IMR-90 (cell line): ENCODE measurements at regions of chr7 and their contacts with region 1.

Region 1: DNA sequence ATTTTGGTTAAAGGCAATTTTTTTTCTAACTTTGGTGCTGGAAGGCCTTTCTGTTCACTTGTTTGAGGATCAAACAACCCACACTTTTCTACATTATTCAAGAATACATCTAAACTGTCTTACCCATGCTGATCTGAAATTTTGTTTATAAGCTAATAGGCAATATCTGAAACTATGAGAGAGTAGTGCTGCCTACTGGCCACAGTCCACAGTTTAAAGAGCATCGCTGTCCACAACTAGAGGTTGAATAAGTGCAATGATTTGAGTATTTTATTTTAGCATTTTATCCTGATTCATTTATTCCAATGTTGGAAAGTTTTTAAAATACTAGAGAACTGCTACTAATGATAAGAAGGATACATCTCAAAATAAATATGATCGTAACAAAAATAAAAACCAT is 306.9 kb downstream of the ELMO1 start:
- DNase-seq: no peak
- ATAC-seq: no peak
- H3K4me3 ChIP-seq: no peak overlapping the region
- H3K27ac ChIP-seq: no peak overlapping the region
- H3K4me1 ChIP-seq: no peaks in the 10 kb centered on the region
- H3K27me3 ChIP-seq: no peaks in the 10 kb centered on the region
- CTCF ChIP-seq: no peak; the same call in 1 of the 2 replicates
- POLR2A ChIP-seq: no peak
- RAD21 ChIP-seq: no peak

Region 2: GRCh38 chr7:36227223-36227622 is 914.5 kb before region 1 on chr7:
- CTCF ChIA-PET with region 1: no interaction called
- POLR2A ChIA-PET with region 1: no interaction called
- dilution Hi-C with region 1: no loop called
- in situ Hi-C with region 1: no loop called
- intact Hi-C with region 1: no loop called
- DNase-seq: peak; percentile 72
- ATAC-seq: peak; percentile 87
- H3K4me3 ChIP-seq: no peak overlapping the region
- H3K27ac ChIP-seq: peak overlapping the region; percentile 17; the same call in 1 of the 2 replicates
- H3K4me1 ChIP-seq: peaks cover 12% of the 10 kb centered on the region
- H3K27me3 ChIP-seq: no peaks in the 10 kb centered on the region
- CTCF ChIP-seq: no peak
- POLR2A ChIP-seq: no peak
- RAD21 ChIP-seq: no peak

Region 3: DNA sequence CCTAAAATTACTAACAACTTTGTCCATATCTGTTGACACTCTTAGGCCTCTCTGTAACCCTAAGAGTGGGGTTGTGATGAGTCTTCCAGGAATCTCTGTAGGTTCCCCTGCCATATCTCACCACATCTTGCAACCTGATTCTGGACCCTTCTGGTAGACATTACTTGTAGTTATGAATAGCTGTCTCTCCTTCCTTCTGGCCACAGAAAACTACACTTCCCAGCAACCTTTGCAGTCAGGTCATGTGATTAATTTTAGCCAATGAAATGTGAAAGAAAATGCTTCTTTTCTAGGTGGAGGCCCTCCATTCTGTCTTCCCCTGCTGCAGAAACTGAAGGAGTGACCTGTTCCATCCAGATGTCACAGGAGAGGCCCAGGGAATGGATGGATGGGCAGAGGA is 269.9 kb before region 1 on chr7:
- CTCF ChIA-PET with region 1: interaction called, 5 read pairs
- POLR2A ChIA-PET with region 1: no interaction called
- dilution Hi-C with region 1: no loop called
- in situ Hi-C with region 1: no loop called
- intact Hi-C with region 1: loop called (anchors 5 kb)
- DNase-seq: peak; percentile 2
- ATAC-seq: no peak
- H3K4me3 ChIP-seq: no peak overlapping the region
- H3K27ac ChIP-seq: no peak overlapping the region
- H3K4me1 ChIP-seq: no peaks in the 10 kb centered on the region
- H3K27me3 ChIP-seq: no peaks in the 10 kb centered on the region
- CTCF ChIP-seq: no peak
- POLR2A ChIP-seq: no peak
- RAD21 ChIP-seq: no peak

Region 4: DNA sequence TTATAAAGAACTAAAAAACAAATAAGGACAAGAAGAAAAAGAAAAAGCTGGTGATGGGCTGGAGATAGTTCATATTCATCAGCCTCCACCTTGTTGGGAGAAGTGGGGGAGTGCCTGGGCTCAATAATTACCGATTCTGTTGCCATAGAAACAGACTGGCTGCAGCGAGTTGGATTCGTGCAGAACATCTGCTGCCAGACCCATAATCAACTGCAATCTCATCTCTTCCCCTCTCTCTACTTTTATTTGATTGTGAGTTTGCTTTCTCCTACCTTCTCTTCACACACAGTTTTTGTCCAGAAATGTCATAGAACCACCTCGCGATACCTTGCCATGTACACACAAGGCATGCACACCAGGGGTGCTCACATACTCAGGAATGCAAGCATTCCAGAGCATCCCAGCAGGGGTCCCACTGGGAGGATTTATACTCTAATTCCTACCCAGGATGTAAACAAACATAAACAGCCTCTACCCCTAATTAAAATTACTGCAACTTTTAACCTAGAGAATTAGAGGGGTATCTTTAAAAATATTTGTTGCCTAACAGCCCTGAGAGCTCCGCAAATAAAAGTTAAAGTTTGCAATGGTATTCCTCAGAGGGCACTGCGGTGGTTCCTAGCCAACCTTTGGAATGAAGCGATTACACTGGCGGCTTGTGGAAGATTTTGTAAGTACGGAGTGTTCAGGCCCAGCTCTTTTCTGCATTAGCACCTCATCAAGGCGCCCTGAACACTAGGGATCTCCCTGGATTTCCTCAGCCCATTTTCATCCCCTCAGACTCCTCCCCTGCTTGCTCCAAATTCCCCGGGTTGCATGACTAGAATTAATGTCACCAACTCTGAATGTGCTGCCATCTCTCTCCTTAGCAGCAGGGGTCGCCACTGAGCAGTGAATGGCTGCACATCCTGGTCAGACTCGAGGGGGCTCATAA is 155.0 kb before region 1 on chr7:
- CTCF ChIA-PET with region 1: no interaction called
- POLR2A ChIA-PET with region 1: no interaction called
- dilution Hi-C with region 1: no loop called
- in situ Hi-C with region 1: no loop called
- intact Hi-C with region 1: loop called (anchors 2 kb)
- DNase-seq: peak; percentile 42
- ATAC-seq: peak; percentile 94
- H3K4me3 ChIP-seq: no peak overlapping the region
- H3K27ac ChIP-seq: no peak overlapping the region
- H3K4me1 ChIP-seq: no peaks in the 10 kb centered on the region
- H3K27me3 ChIP-seq: peaks cover 15% of the 10 kb centered on the region
- CTCF ChIP-seq: peak; percentile 88
- POLR2A ChIP-seq: no peak
- RAD21 ChIP-seq: peak; percentile 81

Region 5: GRCh38 chr7:37643876-37644275 is 502.1 kb after region 1 on chr7:
- CTCF ChIA-PET with region 1: no interaction called
- POLR2A ChIA-PET with region 1: no interaction called
- dilution Hi-C with region 1: no loop called
- in situ Hi-C with region 1: no loop called
- intact Hi-C with region 1: no loop called
- DNase-seq: no peak
- ATAC-seq: no peak
- H3K4me3 ChIP-seq: no peak overlapping the region
- H3K27ac ChIP-seq: no peak overlapping the region
- H3K4me1 ChIP-seq: no peaks in the 10 kb centered on the region
- H3K27me3 ChIP-seq: no peaks in the 10 kb centered on the region
- CTCF ChIP-seq: no peak
- POLR2A ChIP-seq: no peak
- RAD21 ChIP-seq: no peak